Panc1 (cell line): ENCODE measurements at regions of chr1 and their contacts with region 1.

Region 1: DNA sequence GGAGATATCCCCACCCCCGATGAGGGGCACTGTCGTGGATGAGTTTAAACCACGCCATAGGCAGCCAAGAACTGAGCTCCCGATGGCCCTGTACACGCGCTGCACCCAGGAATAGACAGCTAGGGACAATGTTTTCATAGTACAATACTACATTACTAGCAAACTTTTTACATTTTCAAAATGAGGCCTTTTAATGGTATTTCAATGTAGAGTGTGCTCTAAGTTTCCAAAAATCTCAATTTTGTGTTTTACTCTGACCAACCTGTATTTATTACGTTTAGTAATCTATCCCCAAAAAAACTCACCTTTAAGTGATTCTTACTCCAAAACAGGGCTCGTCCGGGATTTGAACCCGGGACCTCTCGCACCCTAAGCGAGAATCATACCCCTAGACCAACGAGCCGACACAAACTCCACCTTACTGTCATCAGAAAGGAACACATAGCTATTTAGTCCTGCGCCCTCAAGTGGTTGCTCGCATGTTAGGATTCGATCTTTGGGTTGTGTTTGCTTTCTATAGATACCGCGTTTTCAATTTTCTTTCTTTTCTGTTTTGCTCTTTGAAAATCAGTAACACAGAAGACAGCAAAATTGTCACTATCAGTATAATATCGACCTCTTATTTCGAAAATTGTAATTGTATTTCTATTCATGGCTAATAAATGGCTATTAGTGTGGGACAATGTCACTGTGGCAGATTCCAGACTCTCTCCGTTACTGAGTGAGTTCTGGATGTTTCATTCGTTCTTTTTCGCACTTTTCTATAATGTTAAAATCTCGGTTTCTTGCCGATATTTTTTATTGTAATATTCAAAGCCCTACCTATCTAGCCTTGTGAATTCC is 6.4 kb upstream of the MPZL1 start:
- DNase-seq: peak; percentile 92
- ATAC-seq: peak; percentile 70
- H3K4me3 ChIP-seq: peak overlapping the region; percentile 92 to 94
- H3K27ac ChIP-seq: peak overlapping the region; percentile 92
- H3K4me1 ChIP-seq: peaks cover 6% of the 10 kb centered on the region; the same call in 1 of the 2 replicates
- H3K27me3 ChIP-seq: no peaks in the 10 kb centered on the region
- CTCF ChIP-seq: peak; percentile 83

Region 2: GRCh38 chr1:167803358-167804207 is 88.2 kb after region 1 on chr1:
- CTCF ChIA-PET with region 1: interaction called, 14 read pairs
- POLR2A ChIA-PET with region 1: interaction called, 3 read pairs
- in situ Hi-C with region 1: no loop called
- intact Hi-C with region 1: loop called (anchors 2 kb)
- DNase-seq: peak; percentile 64
- ATAC-seq: peak; percentile 99
- H3K4me3 ChIP-seq: peak overlapping the region in 1 of 2 experiments; percentile 39; a peak in 2 of 4 replicates
- H3K27ac ChIP-seq: no peak overlapping the region
- H3K4me1 ChIP-seq: no peaks in the 10 kb centered on the region
- H3K27me3 ChIP-seq: no peaks in the 10 kb centered on the region
- CTCF ChIP-seq: peak; percentile 96

Region 3: DNA sequence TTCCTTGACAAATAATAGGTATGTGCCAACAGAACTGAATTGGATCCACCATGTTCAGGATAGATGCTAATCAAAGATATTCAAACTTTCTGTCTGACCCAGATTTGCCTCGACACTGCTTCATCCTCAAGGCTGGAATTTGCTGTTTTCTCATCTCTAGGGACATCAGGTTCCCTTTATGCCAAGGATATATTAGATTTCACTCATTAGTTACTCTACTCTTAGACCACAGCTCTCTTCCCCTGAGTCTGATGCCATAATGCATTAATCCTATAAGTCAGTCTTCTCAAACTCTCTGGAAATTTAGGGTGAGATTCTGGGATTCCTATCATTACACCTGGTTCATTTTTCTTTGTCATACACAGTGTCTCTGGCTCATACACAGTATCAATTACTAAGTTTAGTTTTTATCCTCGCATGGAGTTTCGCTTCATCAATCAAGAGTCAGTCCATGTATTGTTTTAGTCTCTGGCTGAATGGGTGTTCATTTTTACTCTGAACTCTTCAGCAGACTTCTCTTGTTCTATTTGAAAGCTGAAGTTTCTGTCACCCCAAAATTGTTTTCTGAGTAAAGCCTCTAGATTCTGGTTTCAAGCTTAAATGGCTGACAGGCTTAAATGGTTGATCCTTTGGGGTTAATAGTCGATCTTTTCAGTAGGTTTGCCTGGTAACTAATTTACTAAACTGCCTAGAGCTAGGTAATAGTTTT is 211.8 kb after region 1 on chr1:
- CTCF ChIA-PET with region 1: no interaction called
- POLR2A ChIA-PET with region 1: interaction called, 10 read pairs
- in situ Hi-C with region 1: no loop called
- intact Hi-C with region 1: loop called (anchors 5 kb)
- DNase-seq: no peak
- ATAC-seq: peak; percentile 36
- H3K4me3 ChIP-seq: peak overlapping the region; percentile 19 to 32; a peak in 3 of 4 replicates
- H3K27ac ChIP-seq: peak overlapping the region; percentile 92
- H3K4me1 ChIP-seq: peaks cover 41% of the 10 kb centered on the region
- H3K27me3 ChIP-seq: no peaks in the 10 kb centered on the region
- CTCF ChIP-seq: no peak

Region 4: DNA sequence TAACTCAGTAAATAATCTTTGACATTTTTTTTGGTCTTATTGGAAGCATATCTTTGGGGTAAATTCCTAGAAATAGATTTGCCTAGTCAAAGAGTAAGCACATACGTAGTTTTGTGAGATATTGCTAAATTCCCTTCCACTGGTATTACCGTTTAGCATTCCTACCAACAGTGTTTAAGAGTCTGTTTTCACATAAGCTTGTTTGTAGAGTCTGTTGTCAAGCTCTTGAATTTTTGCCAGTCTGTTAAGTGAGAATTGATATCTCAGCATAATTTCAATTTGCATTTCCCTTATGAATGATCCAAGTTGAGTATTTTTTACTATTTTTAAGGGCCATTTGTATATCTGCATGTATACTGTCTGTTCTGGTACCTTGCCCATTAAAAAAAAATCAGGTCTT is 258.5 kb after region 1 on chr1:
- CTCF ChIA-PET with region 1: no interaction called
- POLR2A ChIA-PET with region 1: no interaction called
- in situ Hi-C with region 1: no loop called
- intact Hi-C with region 1: no loop called
- DNase-seq: no peak
- ATAC-seq: no peak
- H3K4me3 ChIP-seq: no peak overlapping the region
- H3K27ac ChIP-seq: no peak overlapping the region
- H3K4me1 ChIP-seq: no peaks in the 10 kb centered on the region
- H3K27me3 ChIP-seq: no peaks in the 10 kb centered on the region
- CTCF ChIP-seq: no peak

Region 5: GRCh38 chr1:168088511-168089325 is 373.3 kb after region 1 on chr1:
- CTCF ChIA-PET with region 1: no interaction called
- POLR2A ChIA-PET with region 1: interaction called, 10 read pairs
- in situ Hi-C with region 1: no loop called
- intact Hi-C with region 1: no loop called
- DNase-seq: no peak
- ATAC-seq: peak; percentile 32; the same call in 1 of the 2 replicates
- H3K4me3 ChIP-seq: no peak overlapping the region
- H3K27ac ChIP-seq: no peak overlapping the region
- H3K4me1 ChIP-seq: peaks cover 5% of the 10 kb centered on the region
- H3K27me3 ChIP-seq: no peaks in the 10 kb centered on the region
- CTCF ChIP-seq: no peak

Region 6: GRCh38 chr1:168139070-168139469 is 423.7 kb after region 1 on chr1:
- CTCF ChIA-PET with region 1: interaction called, 10 read pairs
- POLR2A ChIA-PET with region 1: no interaction called
- in situ Hi-C with region 1: no loop called
- intact Hi-C with region 1: no loop called
- DNase-seq: no peak
- ATAC-seq: no peak
- H3K4me3 ChIP-seq: no peak overlapping the region
- H3K27ac ChIP-seq: no peak overlapping the region
- H3K4me1 ChIP-seq: peaks cover 14% of the 10 kb centered on the region
- H3K27me3 ChIP-seq: peaks cover 25% of the 10 kb centered on the region
- CTCF ChIP-seq: no peak